WTC11 (cell line): ENCODE measurements at regions of chr3 and their contacts with region 1.

Region 1: DNA sequence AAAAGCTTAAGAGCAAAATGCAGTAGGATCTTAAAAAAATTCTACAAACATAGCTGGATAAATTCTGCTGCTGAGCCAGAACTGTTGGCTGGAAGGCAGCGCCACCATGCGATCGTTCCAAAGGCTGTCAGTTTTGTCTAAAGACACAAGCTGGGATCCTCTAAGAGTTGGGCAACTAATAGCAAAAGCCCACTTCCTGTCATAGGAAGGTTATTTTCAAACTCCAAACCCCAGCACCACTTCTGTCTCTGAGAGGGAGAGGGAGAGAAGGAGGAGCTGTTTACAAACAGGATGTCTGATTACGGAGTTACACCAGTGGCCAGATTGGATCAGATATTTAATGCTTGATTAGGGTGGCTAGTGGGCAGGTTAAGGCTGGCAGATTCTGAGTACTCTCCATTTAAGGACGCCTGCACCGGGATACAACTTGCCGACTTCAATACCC is 44.0 kb downstream of the EIF4E3 start:
- DNase-seq: peak; percentile 66
- ATAC-seq: peak; percentile 84
- H3K4me3 Mint-ChIP-seq: no peak overlapping the region
- H3K27ac Mint-ChIP-seq: no peak overlapping the region
- H3K4me1 Mint-ChIP-seq: peaks cover 38% of the 10 kb centered on the region
- H3K27me3 Mint-ChIP-seq: no peaks in the 10 kb centered on the region
- CTCF ChIP-seq: peak; percentile 58

Region 2: DNA sequence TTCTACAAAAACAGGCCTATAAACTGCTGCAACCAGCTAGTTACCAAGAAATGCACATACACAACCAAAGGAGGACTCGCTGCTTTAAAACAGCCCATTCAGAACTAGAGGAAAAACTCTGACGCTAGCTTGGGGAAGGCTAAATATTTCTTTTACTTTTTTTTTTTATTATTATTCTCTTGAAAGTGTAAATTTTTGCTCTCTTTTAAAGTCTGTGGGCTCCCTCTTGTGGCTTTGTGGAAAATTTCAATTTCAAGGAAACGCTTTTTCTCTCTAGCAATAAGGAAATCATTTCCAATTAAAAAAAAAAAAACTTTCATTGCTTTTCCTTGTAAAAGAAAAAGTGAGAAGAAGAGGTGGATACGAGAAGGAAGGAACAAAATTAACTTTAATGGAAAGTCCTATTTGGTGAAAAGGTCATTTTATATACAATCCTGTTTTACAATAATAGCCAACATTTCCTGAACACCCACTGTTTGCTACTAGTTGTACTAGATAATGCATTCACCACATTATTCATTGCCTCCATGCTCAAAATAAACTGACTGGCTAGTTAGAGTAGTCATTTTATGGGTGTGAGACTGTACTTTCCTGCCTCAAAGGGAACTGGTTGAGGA is 1732.9 kb before region 1 on chr3:
- CTCF ChIA-PET with region 1: no interaction called
- POLR2A ChIA-PET with region 1: no interaction called
- DNase-seq: no peak
- ATAC-seq: no peak
- H3K4me3 Mint-ChIP-seq: no peak overlapping the region
- H3K27ac Mint-ChIP-seq: no peak overlapping the region
- H3K4me1 Mint-ChIP-seq: peaks cover 32% of the 10 kb centered on the region
- H3K27me3 Mint-ChIP-seq: no peaks in the 10 kb centered on the region
- CTCF ChIP-seq: peak; percentile 53

Region 3: DNA sequence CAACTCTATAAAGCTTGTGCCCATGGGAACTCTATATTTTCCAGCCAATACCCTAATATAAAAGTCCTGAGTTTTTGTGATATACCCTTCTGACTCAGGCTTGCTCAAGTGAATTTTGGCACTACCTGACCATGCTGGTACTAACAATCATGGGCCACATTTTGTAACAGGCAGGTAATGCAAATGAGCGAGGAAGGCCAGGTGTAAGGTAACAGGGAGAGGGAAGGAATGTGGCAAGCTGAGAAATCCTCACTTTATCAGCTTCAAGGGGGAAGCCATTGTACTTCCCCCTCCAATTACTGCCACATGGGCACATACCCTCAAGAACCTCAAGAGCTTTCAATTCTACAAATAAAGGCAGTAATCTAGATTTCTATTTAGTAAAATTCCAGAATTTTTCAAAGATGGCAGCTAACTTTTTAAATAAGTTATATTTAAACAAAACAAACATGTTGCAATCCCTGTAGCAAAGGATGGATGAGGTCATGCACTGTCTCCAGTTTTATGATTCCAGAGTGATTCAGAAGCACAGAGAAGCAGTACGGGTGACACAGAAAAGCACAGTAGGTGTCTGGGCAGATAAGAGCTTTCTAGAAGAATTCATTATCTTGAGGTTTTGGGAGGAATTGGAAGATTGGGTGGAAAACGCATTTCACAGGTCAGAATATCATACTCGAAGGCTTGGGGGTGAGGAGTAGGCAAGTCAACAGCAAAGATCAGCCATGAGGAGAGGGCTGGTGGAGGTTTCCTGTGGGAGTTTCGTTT is 185.4 kb before region 1 on chr3:
- CTCF ChIA-PET with region 1: no interaction called
- POLR2A ChIA-PET with region 1: no interaction called
- DNase-seq: no peak
- ATAC-seq: peak; percentile 72
- H3K4me3 Mint-ChIP-seq: no peak overlapping the region; the same call in 1 of the 2 replicates
- H3K27ac Mint-ChIP-seq: peak overlapping the region; percentile 80
- H3K4me1 Mint-ChIP-seq: peaks cover 53% of the 10 kb centered on the region
- H3K27me3 Mint-ChIP-seq: no peaks in the 10 kb centered on the region
- CTCF ChIP-seq: no peak

Region 4: GRCh38 chr3:71512000-71512399 is 169.2 kb before region 1 on chr3:
- CTCF ChIA-PET with region 1: interaction called, 13 read pairs
- POLR2A ChIA-PET with region 1: no interaction called
- DNase-seq: peak; percentile 20
- ATAC-seq: peak; percentile 97
- H3K4me3 Mint-ChIP-seq: no peak overlapping the region
- H3K27ac Mint-ChIP-seq: no peak overlapping the region
- H3K4me1 Mint-ChIP-seq: peaks cover 23% of the 10 kb centered on the region
- H3K27me3 Mint-ChIP-seq: no peaks in the 10 kb centered on the region
- CTCF ChIP-seq: peak; percentile 23; the same call in 1 of the 2 replicates

Region 5: GRCh38 chr3:71693641-71694040 is 12.4 kb after region 1 on chr3:
- CTCF ChIA-PET with region 1: interaction called, 15 read pairs
- POLR2A ChIA-PET with region 1: no interaction called
- DNase-seq: no peak
- ATAC-seq: no peak
- H3K4me3 Mint-ChIP-seq: no peak overlapping the region
- H3K27ac Mint-ChIP-seq: no peak overlapping the region
- H3K4me1 Mint-ChIP-seq: peaks cover 40% of the 10 kb centered on the region
- H3K27me3 Mint-ChIP-seq: no peaks in the 10 kb centered on the region
- CTCF ChIP-seq: no peak

Region 6: GRCh38 chr3:71718072-71718471 is 36.8 kb after region 1 on chr3:
- CTCF ChIA-PET with region 1: no interaction called
- POLR2A ChIA-PET with region 1: no interaction called
- DNase-seq: no peak
- ATAC-seq: no peak
- H3K4me3 Mint-ChIP-seq: no peak overlapping the region
- H3K27ac Mint-ChIP-seq: no peak overlapping the region
- H3K4me1 Mint-ChIP-seq: no peaks in the 10 kb centered on the region
- H3K27me3 Mint-ChIP-seq: peaks cover 4% of the 10 kb centered on the region
- CTCF ChIP-seq: no peak